ENCODE measurements at regions of chr11 and their contacts with region 1.

Region 1: GRCh38 chr11:41578421-41579051 is 119.1 kb upstream of the LRRC4C start:
- DNase-seq: no peak
- H3K4me3 ChIP-seq: no peak overlapping the region
- H3K27ac ChIP-seq: no peak overlapping the region
- H3K4me1 ChIP-seq: no peaks in the 10 kb centered on the region
- H3K27me3 ChIP-seq: no peaks in the 10 kb centered on the region
- CTCF ChIP-seq: no peak
- POLR2A ChIP-seq: no peak

Region 2: GRCh38 chr11:41612415-41612814 is 33.9 kb after region 1 on chr11:
- intact Hi-C with region 1: no loop called
- DNase-seq: no peak
- H3K4me3 ChIP-seq: no peak overlapping the region
- H3K27ac ChIP-seq: no peak overlapping the region
- H3K4me1 ChIP-seq: no peaks in the 10 kb centered on the region
- H3K27me3 ChIP-seq: no peaks in the 10 kb centered on the region
- CTCF ChIP-seq: no peak
- POLR2A ChIP-seq: no peak

Region 3: DNA sequence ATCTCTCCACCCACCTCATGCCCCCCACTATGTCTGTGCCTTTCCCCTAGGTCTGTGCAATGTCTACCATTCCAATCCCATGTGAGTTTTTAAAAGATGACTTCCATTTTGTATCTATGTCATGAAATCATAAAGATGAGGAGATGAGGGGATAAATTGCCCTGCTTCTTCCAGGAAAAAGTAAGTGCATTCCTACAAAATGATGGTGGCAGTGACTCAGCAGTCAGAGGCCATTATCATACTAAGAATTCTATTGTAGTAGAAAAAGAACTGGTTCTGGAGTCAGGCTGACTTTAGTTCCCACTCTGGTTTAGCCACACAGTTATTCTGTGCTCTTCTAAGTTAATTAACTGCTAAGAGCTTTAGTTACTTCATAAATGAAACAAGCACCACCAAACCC is 1643.7 kb after region 1 on chr11:
- intact Hi-C with region 1: loop called (anchors 10 kb)
- DNase-seq: no peak
- H3K4me3 ChIP-seq: no peak overlapping the region
- H3K27ac ChIP-seq: no peak overlapping the region
- H3K4me1 ChIP-seq: no peaks in the 10 kb centered on the region
- H3K27me3 ChIP-seq: no peaks in the 10 kb centered on the region
- CTCF ChIP-seq: no peak
- POLR2A ChIP-seq: no peak

Measured in breast epithelium (tissue), 4 donors.